Activated T-helper 2 cell treated with anti-CD3 and anti-CD28 coated beads, Interferon-gamma antibody, Interleukin-2, Interleukin-4, amounts not matched to agents 10 μg/mL and 5 μg/mL and 100 μg/mL, durations not matched to agents 14 hours and 24 hours and 36 hours (primary cell): ENCODE measurements at regions of chr1 and their contacts with region 1.

Region 1: GRCh38 chr1:109773146-109773899 is 9.6 kb upstream of the EPS8L3 start:
- DNase-seq: peak; percentile 65
- H3K4me3 Mint-ChIP-seq: no peak overlapping the region
- H3K27ac Mint-ChIP-seq: no peak overlapping the region
- H3K4me1 Mint-ChIP-seq: peaks cover 23% of the 10 kb centered on the region
- H3K27me3 Mint-ChIP-seq: peaks cover 5% of the 10 kb centered on the region

Region 2: GRCh38 chr1:109226078-109226445 is 547.3 kb before region 1 on chr1:
- intact Hi-C with region 1: no loop called
- DNase-seq: no peak
- H3K4me3 Mint-ChIP-seq: no peak overlapping the region
- H3K27ac Mint-ChIP-seq: no peak overlapping the region
- H3K4me1 Mint-ChIP-seq: peaks cover 10% of the 10 kb centered on the region
- H3K27me3 Mint-ChIP-seq: no peaks in the 10 kb centered on the region

Region 3: DNA sequence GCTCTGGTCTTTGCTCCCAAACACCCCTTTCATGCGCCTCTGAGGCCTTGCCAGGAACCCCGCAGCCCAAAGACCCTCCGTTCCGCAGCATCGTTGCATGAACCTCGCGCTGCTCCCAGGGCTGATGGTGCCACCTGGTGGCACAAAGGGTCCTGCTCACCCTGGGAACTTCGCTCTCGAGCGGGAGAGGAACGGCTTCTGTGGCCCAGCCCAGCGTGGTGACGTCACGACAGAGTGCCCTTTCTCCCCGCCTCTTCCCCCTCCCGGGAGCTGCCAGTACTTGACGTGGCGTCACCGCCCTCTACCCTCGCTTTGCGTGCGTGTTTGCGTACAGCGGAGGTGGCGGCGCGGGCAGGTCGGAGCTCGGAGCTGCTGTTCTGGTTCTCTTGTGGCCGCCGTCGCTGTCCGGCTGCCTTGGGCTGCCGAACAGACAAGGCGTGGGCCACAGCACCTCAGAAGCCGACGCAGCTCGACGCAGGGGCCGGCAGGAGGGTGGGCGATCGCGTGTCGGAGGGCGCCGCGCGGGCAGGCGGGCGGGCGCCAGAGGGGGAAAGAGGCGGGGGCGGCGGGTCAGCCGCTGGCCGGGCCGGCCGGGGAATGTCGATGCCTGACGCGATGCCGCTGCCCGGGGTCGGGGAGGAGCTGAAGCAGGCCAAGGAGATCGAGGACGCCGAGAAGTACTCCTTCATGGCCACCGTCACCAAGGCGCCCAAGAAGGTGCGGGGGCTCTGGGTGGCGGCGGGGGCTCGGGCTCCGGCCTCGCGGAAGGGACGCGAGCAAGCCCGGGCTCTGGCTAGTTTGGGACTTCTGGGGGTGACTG is 211.3 kb after region 1 on chr1 and contains the start of gene AHCYL1:
- intact Hi-C with region 1: loop called (anchors 1 kb)
- DNase-seq: peak; percentile 99
- H3K4me3 Mint-ChIP-seq: peak within 1 kb of the TSS; percentile 97
- H3K27ac Mint-ChIP-seq: peak within 1 kb of the TSS; percentile 97
- H3K4me1 Mint-ChIP-seq: peaks cover 42% of the 10 kb centered on the region
- H3K27me3 Mint-ChIP-seq: no peaks in the 10 kb centered on the region
- total RNA-seq, gene AHCYL1: 85.8 and 86.5 TPM in 2 replicates

Region 4: GRCh38 chr1:110011527-110012041 is 238.3 kb after region 1 on chr1:
- intact Hi-C with region 1: loop called (anchors 1 kb)
- DNase-seq: peak; percentile 27
- H3K4me3 Mint-ChIP-seq: no peak overlapping the region
- H3K27ac Mint-ChIP-seq: peak overlapping the region; percentile 7
- H3K4me1 Mint-ChIP-seq: peaks cover 5% of the 10 kb centered on the region
- H3K27me3 Mint-ChIP-seq: no peaks in the 10 kb centered on the region

Region 5: DNA sequence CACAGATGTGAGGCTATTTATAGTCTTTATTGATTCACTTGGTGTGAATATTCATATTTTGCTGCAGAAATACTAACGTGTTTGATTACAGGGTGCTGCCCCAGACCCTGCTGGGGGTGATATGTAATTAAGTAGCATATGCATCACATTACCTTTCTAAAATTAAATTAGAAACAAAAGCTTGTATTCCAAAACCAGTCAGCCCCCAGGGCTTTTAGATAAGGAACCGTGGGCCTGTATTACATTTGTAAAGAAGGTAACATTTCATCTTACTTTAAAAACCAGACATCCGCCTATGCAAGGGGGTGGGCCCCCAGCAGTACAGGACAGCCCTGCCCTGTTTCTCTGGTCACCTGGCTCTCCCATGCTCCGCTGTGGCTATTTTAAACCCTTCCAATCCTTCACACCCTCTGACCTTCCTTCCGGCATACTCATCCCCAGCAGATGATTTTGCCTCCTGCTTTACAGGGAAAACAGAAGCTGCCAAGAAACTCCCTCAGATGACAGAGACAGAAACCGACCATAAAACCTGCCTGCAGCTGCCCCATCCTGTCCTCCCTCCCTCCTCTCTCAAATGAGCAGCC is 414.8 kb after region 1 on chr1:
- intact Hi-C with region 1: no loop called
- DNase-seq: no peak
- H3K4me3 Mint-ChIP-seq: no peak overlapping the region
- H3K27ac Mint-ChIP-seq: no peak overlapping the region
- H3K4me1 Mint-ChIP-seq: peaks cover 15% of the 10 kb centered on the region
- H3K27me3 Mint-ChIP-seq: peaks cover 14% of the 10 kb centered on the region

Region 6: DNA sequence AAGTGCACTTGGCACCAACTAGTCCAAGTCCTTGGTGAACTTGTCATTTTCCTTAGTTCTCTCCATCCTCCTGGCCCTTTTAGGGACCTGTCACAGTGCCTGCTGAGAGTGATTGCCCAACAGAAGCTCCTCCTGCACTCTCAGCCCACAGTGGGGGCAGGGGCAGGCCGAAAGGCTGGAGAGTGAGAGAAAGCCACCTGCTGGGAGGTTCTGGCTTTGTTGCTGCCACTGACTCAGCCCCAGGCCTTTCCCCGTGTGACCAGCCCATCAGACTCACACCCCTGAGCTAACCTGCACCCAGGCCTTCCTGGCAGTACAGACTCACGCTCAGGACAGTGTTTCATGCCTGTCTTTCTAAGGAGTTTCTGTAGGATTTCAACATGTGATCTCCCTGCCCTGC is 660.5 kb after region 1 on chr1:
- intact Hi-C with region 1: no loop called
- DNase-seq: no peak
- H3K4me3 Mint-ChIP-seq: no peak overlapping the region
- H3K27ac Mint-ChIP-seq: no peak overlapping the region
- H3K4me1 Mint-ChIP-seq: no peaks in the 10 kb centered on the region
- H3K27me3 Mint-ChIP-seq: peaks cover 15% of the 10 kb centered on the region